Activated T-helper 2 cell treated with anti-CD3 and anti-CD28 coated beads, Interferon-gamma antibody, Interleukin-2, Interleukin-4, amounts not matched to agents 10 μg/mL and 5 μg/mL and 100 μg/mL, durations not matched to agents 14 hours and 24 hours and 36 hours (primary cell): ENCODE measurements at regions of chr9 and their contacts with region 1.

Region 1: GRCh38 chr9:96418074-96418809 is at the start of gene ZNF367:
- DNase-seq: peak; percentile 95
- H3K4me3 Mint-ChIP-seq: peak within 1 kb of the TSS; percentile 89
- H3K27ac Mint-ChIP-seq: peak within 1 kb of the TSS; percentile 91
- H3K4me1 Mint-ChIP-seq: peaks cover 30% of the 10 kb centered on the region
- H3K27me3 Mint-ChIP-seq: no peaks in the 10 kb centered on the region
- total RNA-seq, gene ZNF367: 19.5 and 19.6 TPM in 2 replicates

Region 2: GRCh38 chr9:95875305-95876137 is 542.7 kb before region 1 on chr9 and contains the start of gene ERCC6L2:
- intact Hi-C with region 1: loop called (anchors 10 kb)
- DNase-seq: peak; percentile 91
- H3K4me3 Mint-ChIP-seq: no peak within 1 kb of the TSS
- H3K27ac Mint-ChIP-seq: no peak within 1 kb of the TSS
- H3K4me1 Mint-ChIP-seq: peaks cover 30% of the 10 kb centered on the region
- H3K27me3 Mint-ChIP-seq: no peaks in the 10 kb centered on the region
- total RNA-seq, gene ERCC6L2: 28.2 and 33.0 TPM in 2 replicates

Region 3: GRCh38 chr9:96383165-96383942 is 34.9 kb before region 1 on chr9 and contains the start of gene SLC35D2:
- intact Hi-C with region 1: loop called (anchors 5 kb)
- DNase-seq: no peak
- H3K4me3 Mint-ChIP-seq: peak within 1 kb of the TSS; percentile 76
- H3K27ac Mint-ChIP-seq: no peak within 1 kb of the TSS
- H3K4me1 Mint-ChIP-seq: peaks cover 14% of the 10 kb centered on the region
- H3K27me3 Mint-ChIP-seq: no peaks in the 10 kb centered on the region
- total RNA-seq, gene SLC35D2: 7.0 and 8.0 TPM in 2 replicates

Region 4: DNA sequence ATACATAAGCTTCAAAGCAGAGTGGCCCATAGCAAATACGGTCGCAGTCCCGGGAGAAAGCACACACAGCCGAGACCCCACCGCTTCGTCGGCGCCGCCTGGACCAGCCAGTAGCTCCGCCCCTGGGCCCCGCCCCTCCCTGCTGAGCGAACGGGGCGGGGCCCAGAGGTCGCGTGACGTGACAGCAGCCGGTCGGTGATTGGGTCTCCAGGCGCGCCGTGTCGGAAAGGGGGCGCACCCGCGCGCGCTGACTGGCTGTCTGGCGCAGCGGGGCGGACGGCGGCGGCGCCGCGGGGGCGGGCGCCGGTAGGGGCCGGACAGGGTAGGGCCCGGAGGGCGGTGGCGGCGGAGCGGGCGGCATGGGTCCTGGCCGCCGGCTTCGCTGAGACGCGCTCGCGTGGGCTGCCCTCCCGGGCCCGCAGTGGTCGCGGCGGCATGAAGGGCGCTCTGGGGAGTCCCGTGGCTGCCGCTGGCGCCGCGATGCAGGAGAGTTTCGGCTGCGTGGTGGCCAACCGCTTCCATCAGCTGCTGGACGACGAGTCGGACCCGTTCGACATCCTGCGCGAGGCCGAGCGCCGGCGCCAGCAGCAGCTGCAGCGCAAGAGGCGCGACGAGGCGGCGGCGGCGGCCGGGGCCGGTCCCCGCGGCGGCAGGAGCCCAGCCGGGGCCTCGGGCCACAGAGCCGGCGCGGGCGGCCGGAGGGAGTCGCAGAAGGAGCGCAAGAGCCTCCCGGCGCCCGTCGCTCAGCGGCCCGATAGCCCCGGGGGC is 31.8 kb after region 1 on chr9 and contains the start of gene HABP4:
- intact Hi-C with region 1: loop called (anchors 1 kb)
- DNase-seq: peak; percentile 93
- H3K4me3 Mint-ChIP-seq: peak within 1 kb of the TSS; percentile 86
- H3K27ac Mint-ChIP-seq: no peak within 1 kb of the TSS
- H3K4me1 Mint-ChIP-seq: peaks cover 28% of the 10 kb centered on the region
- H3K27me3 Mint-ChIP-seq: peaks cover 11% of the 10 kb centered on the region
- total RNA-seq, gene HABP4: 14.3 and 14.4 TPM in 2 replicates

Region 5: DNA sequence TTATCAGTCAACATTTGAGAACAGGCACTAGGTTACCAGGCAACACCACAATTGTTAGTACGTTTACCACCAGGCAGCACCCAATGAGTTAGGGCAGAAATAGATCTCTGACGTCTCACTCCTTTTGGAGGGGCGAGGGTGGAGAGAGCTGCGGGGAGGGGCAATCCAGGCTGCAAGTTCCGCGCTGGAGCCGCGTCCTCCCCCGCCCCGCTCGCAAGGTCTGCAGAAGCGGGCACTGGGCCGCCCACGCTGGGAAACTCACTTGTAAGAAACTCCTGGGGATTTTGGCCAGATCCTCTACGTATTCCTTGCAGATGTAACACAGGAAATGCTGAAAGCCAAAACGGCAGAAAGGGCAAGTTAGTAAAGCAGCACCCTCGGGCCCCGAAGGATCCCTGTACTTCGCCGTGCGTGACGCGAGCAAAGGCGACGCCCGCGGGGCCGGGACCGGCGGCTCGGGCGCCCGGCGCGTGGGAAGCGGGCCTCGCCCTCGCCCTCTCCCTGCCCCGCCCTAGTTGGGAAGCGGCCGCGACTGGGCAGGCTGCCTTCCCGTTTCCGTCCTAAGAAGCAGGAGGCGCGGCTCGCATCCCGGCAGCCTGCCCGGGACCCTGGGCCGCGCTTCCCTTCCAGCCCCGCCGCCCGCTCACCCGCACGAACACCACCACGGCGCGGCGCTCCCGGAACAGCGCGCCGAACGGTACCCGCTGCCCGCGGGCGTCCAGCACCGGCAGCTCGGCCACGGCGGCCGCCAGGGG is 236.4 kb after region 1 on chr9:
- intact Hi-C with region 1: loop called (anchors 2 kb)
- DNase-seq: peak; percentile 62
- H3K4me3 Mint-ChIP-seq: peak overlapping the region; percentile 85
- H3K27ac Mint-ChIP-seq: peak overlapping the region; percentile 73
- H3K4me1 Mint-ChIP-seq: peaks cover 16% of the 10 kb centered on the region
- H3K27me3 Mint-ChIP-seq: peaks cover 14% of the 10 kb centered on the region

Region 6: DNA sequence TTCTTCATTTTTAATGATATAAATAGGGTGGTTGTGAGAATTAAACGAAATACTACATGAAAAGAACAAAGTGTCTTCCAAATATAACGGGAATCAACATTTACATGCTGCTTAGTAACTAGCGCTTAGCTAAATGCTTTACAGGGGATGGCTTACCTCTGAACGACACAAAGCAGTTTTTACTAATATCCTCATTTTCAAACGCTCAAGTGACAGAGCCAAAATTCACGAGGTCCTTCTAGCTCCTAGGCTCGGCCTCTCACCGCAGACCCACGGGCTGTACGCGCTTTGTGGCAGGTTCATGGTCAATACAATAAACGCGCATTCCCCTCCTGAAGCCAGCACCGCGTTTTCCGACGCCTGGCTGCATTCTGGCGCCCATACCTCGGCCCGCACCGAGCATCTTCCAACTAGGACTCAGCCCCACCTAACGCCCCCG is 359.2 kb after region 1 on chr9:
- intact Hi-C with region 1: loop called (anchors 5 kb)
- DNase-seq: no peak
- H3K4me3 Mint-ChIP-seq: peak overlapping the region; percentile 100
- H3K27ac Mint-ChIP-seq: peak overlapping the region; percentile 91
- H3K4me1 Mint-ChIP-seq: peaks cover 24% of the 10 kb centered on the region
- H3K27me3 Mint-ChIP-seq: no peaks in the 10 kb centered on the region